Activated CD8-positive, alpha-beta T cell treated with anti-CD3 and anti-CD28 coated beads, Interleukin-2, amount 10 ng/mL, durations not matched to agents 7 days and 5 days (primary cell): ENCODE measurements at regions of chr11 and their contacts with region 1.

Region 1: DNA sequence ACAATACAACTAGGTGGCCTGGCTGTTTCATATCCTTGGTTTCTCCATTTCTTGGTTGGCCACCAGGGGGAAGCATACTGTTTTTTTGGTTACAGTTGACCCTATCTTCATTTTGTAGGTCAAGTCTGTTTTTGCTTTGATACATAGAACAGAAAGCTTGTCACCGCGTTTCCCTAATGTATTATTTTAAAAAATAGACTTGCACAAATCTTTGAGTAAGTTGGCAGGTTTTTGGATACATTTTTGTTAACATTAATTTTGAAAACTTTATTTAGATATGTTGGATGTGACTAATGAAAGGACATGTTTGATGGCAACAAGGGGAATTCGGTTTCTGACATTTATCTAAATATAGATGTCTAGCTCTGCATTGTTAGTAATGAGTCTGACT is 3.0 kb downstream of the NCR3LG1 start:
- DNase-seq: peak; percentile 85
- ATAC-seq: peak; percentile 23
- H3K4me3 Mint-ChIP-seq: peak overlapping the region; percentile 82
- H3K27ac Mint-ChIP-seq: no peak overlapping the region
- H3K4me1 Mint-ChIP-seq: peaks cover 37% of the 10 kb centered on the region
- H3K27me3 Mint-ChIP-seq: peaks cover 3% of the 10 kb centered on the region

Region 2: DNA sequence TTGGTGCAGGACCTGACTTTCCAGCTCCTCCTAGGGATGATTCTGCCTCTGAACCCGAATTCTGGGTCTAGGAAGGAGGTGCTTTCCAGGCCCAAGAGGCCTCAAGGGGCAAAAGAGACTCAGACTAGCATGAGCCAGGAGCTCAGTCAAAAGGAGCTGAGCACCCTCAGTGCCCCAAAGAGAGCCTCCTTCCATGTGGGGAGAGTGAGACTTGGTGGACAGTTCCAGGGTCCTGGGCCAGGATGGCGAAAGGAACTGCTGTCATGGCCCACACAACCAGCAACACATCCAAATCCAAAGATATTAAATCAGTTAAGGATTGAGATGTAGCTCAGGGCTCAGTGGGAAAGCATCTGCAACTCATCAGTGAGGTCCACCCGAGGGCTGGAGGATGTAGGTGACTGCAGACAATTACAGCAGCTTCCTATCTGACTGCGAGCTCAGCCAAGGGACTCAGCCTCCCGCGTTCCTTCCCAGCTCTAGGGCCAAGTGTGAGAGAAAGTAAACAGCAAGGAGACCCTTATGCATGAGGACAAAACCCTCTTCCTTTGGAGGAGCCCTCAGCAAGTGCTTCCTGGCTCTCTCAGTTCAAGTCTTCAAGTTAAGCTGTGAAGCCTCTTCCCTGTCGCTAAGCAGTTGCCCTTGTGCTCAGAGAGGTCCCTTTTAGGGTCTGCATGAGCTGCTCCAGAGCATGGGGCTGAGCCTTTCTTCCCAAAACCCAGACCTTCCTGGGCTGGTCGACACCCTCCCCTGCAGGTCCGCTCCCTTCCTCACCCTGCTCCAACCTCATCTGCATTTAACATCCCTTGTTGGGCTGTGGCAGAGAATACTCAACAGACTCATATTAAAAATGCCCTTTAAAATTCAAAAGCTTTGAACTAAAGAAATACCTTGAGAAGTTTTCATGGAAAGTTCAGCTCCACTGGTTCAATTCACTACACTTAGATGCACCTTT is 580.3 kb before region 1 on chr11:
- CTCF ChIA-PET with region 1: no interaction called
- POLR2A ChIA-PET with region 1: no interaction called
- DNase-seq: no peak
- ATAC-seq: no peak
- H3K4me3 Mint-ChIP-seq: no peak overlapping the region
- H3K27ac Mint-ChIP-seq: no peak overlapping the region
- H3K4me1 Mint-ChIP-seq: no peaks in the 10 kb centered on the region
- H3K27me3 Mint-ChIP-seq: no peaks in the 10 kb centered on the region

Region 3: DNA sequence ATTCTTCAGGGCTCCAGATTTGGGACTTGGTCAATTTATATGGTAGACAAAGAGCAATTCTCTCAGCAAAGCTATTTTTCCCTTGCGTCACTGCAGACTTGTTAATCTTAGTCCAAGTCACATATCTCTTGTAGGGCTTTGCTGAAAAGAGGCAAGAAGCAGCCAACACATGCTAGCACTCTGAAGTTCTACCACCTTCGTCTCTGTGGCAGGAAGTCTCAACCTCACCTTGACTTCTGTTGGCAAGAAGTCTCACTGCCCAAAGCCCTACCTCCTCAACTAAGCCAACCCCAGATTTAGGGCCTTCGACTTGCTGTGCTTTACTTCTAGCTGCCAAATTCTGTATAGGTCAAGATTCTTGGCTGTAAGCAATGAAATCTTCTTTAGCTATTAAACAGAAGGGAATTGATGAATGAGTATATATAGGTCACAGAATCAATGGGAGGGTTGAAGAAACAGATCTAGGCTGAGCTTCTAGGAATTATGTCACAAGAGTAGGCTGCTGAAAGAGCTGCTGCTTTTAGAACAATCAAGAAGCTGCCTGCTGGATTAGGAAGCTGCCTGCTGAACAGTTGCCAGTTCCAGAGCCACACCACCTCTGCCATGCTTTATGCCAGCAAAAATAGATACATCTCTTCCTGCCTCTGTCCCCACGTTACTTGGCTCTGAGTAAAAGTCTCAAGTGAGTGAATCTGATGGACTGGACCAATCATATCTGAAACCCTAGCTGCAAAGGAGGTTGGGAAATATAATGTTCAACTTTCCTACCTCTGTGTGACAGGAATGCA is 20.6 kb before region 1 on chr11:
- CTCF ChIA-PET with region 1: interaction called, 10 read pairs
- POLR2A ChIA-PET with region 1: no interaction called
- DNase-seq: peak; percentile 52
- ATAC-seq: peak; percentile 88
- H3K4me3 Mint-ChIP-seq: no peak overlapping the region
- H3K27ac Mint-ChIP-seq: peak overlapping the region; percentile 66
- H3K4me1 Mint-ChIP-seq: peaks cover 21% of the 10 kb centered on the region
- H3K27me3 Mint-ChIP-seq: no peaks in the 10 kb centered on the region

Region 4: GRCh38 chr11:17366495-17366894 is 11.9 kb after region 1 on chr11:
- CTCF ChIA-PET with region 1: interaction called, 24 read pairs
- POLR2A ChIA-PET with region 1: no interaction called
- DNase-seq: no peak
- ATAC-seq: no peak
- H3K4me3 Mint-ChIP-seq: no peak overlapping the region
- H3K27ac Mint-ChIP-seq: no peak overlapping the region
- H3K4me1 Mint-ChIP-seq: peaks cover 12% of the 10 kb centered on the region
- H3K27me3 Mint-ChIP-seq: no peaks in the 10 kb centered on the region

Region 5: GRCh38 chr11:17403982-17404759 is 49.6 kb after region 1 on chr11:
- CTCF ChIA-PET with region 1: no interaction called
- POLR2A ChIA-PET with region 1: no interaction called
- DNase-seq: no peak
- ATAC-seq: no peak
- H3K4me3 Mint-ChIP-seq: no peak overlapping the region
- H3K27ac Mint-ChIP-seq: no peak overlapping the region
- H3K4me1 Mint-ChIP-seq: peaks cover 20% of the 10 kb centered on the region
- H3K27me3 Mint-ChIP-seq: peaks cover 4% of the 10 kb centered on the region

Region 6: GRCh38 chr11:17528181-17528691 is 173.6 kb after region 1 on chr11:
- CTCF ChIA-PET with region 1: interaction called, 10 read pairs
- POLR2A ChIA-PET with region 1: no interaction called
- DNase-seq: peak; percentile 65
- ATAC-seq: peak; percentile 88
- H3K4me3 Mint-ChIP-seq: no peak overlapping the region
- H3K27ac Mint-ChIP-seq: no peak overlapping the region
- H3K4me1 Mint-ChIP-seq: no peaks in the 10 kb centered on the region
- H3K27me3 Mint-ChIP-seq: peaks cover 4% of the 10 kb centered on the region